H1 (cell line): ENCODE measurements at regions of chr21 and their contacts with region 1.

Region 1: GRCh38 chr21:31526040-31526439 is 133.5 kb upstream of the SOD1 start:
- DNase-seq: no peak
- H3K4me3 ChIP-seq: no peak overlapping the region
- H3K27ac ChIP-seq: no peak overlapping the region
- H3K4me1 ChIP-seq: peaks cover 2 to 23% (median 9%) of the 10 kb centered on the region in 4 experiments; a peak in 6 of 7 replicates
- H3K27me3 ChIP-seq: no peaks in the 10 kb centered on the region
- CTCF ChIP-seq: no peak
- EP300 ChIP-seq: no peak
- POLR2A ChIP-seq: no peak
- RAD21 ChIP-seq: no peak

Region 2: GRCh38 chr21:31509194-31510017 is 16.6 kb before region 1 on chr21:
- CTCF ChIA-PET with region 1: interaction called, 11 read pairs
- POLR2A ChIA-PET with region 1: interaction called, 5 read pairs
- DNase-seq: peak in 1 of 2 experiments; percentile 85
- H3K4me3 ChIP-seq: no peak overlapping the region
- H3K27ac ChIP-seq: no peak overlapping the region
- H3K4me1 ChIP-seq: peaks cover 2 to 9% (median 6%) of the 10 kb centered on the region in 4 experiments; a peak in 6 of 7 replicates
- H3K27me3 ChIP-seq: no peaks in the 10 kb centered on the region
- CTCF ChIP-seq: peak; percentile 50 to 74 (median 65)
- EP300 ChIP-seq: no peak
- POLR2A ChIP-seq: no peak
- RAD21 ChIP-seq: peak; percentile 45 to 60; a peak in 3 of 4 replicates

Region 3: DNA sequence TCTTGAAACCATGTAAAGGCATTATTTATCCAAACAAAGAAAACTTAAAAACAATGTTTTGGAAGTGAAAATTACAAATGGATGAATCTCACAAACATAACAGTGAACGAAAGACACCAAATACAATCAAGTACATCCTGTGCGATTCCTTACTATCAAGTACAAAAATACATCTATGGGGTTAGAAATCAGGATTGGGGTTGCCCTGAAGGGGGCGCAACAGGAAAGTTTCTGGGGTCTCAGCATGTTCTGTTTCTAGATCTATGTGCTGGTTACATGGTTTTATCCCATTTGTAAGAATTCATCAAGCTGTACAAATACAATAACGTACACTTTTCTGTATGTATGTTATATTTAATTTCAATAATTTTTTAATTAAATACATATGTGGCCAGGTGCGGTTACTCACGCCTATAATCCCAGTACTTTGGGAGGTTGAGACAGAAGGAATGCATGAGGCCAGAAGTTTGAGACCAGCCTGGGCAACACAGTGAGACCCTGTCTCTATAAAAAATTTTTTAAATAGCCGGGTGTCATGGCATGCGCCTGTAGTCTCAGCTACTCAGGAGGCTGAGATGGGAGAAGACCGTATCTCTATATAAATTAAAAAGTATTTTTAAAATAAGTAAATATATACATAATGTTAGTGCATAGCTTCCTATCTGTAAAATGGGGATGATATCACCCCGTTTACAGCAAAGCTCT is 12.0 kb after region 1 on chr21:
- CTCF ChIA-PET with region 1: interaction called, 24 read pairs
- POLR2A ChIA-PET with region 1: interaction called, 5 read pairs
- DNase-seq: peak in 1 of 2 experiments; percentile 77
- H3K4me3 ChIP-seq: no peak overlapping the region
- H3K27ac ChIP-seq: no peak overlapping the region
- H3K4me1 ChIP-seq: no peaks in the 10 kb centered on the region
- H3K27me3 ChIP-seq: no peaks in the 10 kb centered on the region
- CTCF ChIP-seq: peak; percentile 17 to 78 (median 65)
- EP300 ChIP-seq: no peak
- POLR2A ChIP-seq: no peak
- RAD21 ChIP-seq: peak; percentile 67 to 75

Region 4: DNA sequence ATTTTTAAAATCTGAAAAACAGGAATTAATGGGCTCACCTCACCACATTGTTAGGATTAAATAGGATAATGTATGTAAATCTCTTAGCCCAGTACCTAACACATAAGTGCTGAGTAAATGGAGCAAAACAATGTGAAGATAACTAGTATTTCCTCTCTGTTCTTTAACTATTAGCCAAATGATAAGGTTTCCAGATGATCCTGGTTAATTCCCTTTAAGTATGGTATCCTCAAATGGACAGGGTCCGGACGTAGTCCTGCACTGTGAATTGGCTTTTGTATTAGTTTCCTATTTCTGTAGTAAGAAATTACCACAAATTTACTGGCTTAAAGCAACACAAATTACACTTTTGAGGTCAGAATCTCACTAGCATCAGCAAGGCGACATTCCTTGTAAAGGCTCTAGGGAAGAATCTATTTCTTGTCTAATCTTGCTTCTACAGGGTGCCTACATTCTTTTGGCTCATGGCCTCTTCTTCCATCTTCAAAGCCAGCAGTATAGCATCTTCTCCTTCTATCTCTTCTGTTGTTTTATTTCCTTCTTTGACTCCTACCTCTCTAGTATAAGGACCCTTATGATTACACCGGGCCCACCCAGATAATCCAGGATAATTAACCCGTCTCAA is 188.8 kb after region 1 on chr21:
- CTCF ChIA-PET with region 1: no interaction called
- POLR2A ChIA-PET with region 1: no interaction called
- DNase-seq: no peak
- H3K4me3 ChIP-seq: no peak overlapping the region
- H3K27ac ChIP-seq: no peak overlapping the region
- H3K4me1 ChIP-seq: peaks cover 0 to 17% (median 4%) of the 10 kb centered on the region in 4 experiments; a peak in 4 of 7 replicates
- H3K27me3 ChIP-seq: no peaks in the 10 kb centered on the region
- CTCF ChIP-seq: no peak
- EP300 ChIP-seq: no peak
- POLR2A ChIP-seq: 0 out of 3 replicates have a peak, but pooled peaks of 1 of the 2 experiments have one; percentile 18
- RAD21 ChIP-seq: no peak